Activated T-helper 1 cell treated with anti-CD3 and anti-CD28 coated beads, Interleukin-12 subunit alpha, Interleukin-12 subunit beta, Interleukin-2, Interleukin-4 antibody, amounts not matched to agents 30 ng/mL and 10 ng/mL and 1 ng/mL, durations not matched to agents 14 hours and 24 hours and 36 hours (primary cell): ENCODE measurements at regions of chr10 and their contacts with region 1.

Region 1: GRCh38 chr10:50417886-50418830 is 166.8 kb upstream of the ASAH2 start:
- DNase-seq: peak; percentile 64
- H3K4me3 Mint-ChIP-seq: peak overlapping the region; percentile 92
- H3K27ac Mint-ChIP-seq: peak overlapping the region; percentile 85
- H3K4me1 Mint-ChIP-seq: peaks cover 74% of the 10 kb centered on the region
- H3K27me3 Mint-ChIP-seq: no peaks in the 10 kb centered on the region

Region 2: GRCh38 chr10:49419005-49419404 is 999.2 kb before region 1 on chr10:
- intact Hi-C with region 1: no loop called
- DNase-seq: no peak
- H3K4me3 Mint-ChIP-seq: no peak overlapping the region
- H3K27ac Mint-ChIP-seq: no peak overlapping the region
- H3K4me1 Mint-ChIP-seq: no peaks in the 10 kb centered on the region
- H3K27me3 Mint-ChIP-seq: no peaks in the 10 kb centered on the region

Region 3: GRCh38 chr10:50291261-50291850 is 126.8 kb before region 1 on chr10:
- intact Hi-C with region 1: loop called (anchors 2 kb)
- DNase-seq: no peak
- H3K4me3 Mint-ChIP-seq: no peak overlapping the region
- H3K27ac Mint-ChIP-seq: no peak overlapping the region
- H3K4me1 Mint-ChIP-seq: no peaks in the 10 kb centered on the region
- H3K27me3 Mint-ChIP-seq: peaks cover 13% of the 10 kb centered on the region

Region 4: GRCh38 chr10:50367732-50368131 is 50.4 kb before region 1 on chr10:
- intact Hi-C with region 1: loop called (anchors 1 kb)
- DNase-seq: no peak
- H3K4me3 Mint-ChIP-seq: no peak overlapping the region
- H3K27ac Mint-ChIP-seq: no peak overlapping the region
- H3K4me1 Mint-ChIP-seq: peaks cover 8% of the 10 kb centered on the region
- H3K27me3 Mint-ChIP-seq: no peaks in the 10 kb centered on the region

Region 5: GRCh38 chr10:50396491-50397311 is 21.5 kb before region 1 on chr10:
- intact Hi-C with region 1: loop called (anchors 1 kb)
- DNase-seq: no peak
- H3K4me3 Mint-ChIP-seq: peak overlapping the region; percentile 71
- H3K27ac Mint-ChIP-seq: peak overlapping the region; percentile 88
- H3K4me1 Mint-ChIP-seq: peaks cover 37% of the 10 kb centered on the region
- H3K27me3 Mint-ChIP-seq: peaks cover 1% of the 10 kb centered on the region

Region 6: DNA sequence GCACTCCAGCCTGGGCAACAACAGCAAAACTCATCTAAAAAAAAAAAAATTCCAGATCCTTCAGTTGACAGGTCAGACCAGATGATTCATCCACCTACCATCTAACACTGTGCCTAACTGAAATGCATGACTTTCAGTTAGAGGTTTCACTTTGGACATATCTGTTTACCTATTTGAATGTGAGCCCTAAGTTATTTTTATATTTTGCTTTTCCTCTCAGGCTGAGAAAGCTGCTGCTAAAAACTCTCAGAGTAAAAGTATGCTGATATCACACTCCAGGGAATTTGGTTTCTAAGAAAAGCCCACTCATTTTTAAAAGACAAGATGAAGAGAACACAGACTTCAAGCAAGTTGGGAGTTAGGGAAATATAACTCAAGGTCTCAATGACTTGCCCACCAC is 79.6 kb after region 1 on chr10:
- intact Hi-C with region 1: loop called (anchors 2 kb)
- DNase-seq: no peak
- H3K4me3 Mint-ChIP-seq: peak overlapping the region; percentile 45
- H3K27ac Mint-ChIP-seq: peak overlapping the region; percentile 82
- H3K4me1 Mint-ChIP-seq: peaks cover 54% of the 10 kb centered on the region
- H3K27me3 Mint-ChIP-seq: no peaks in the 10 kb centered on the region

Region 7: GRCh38 chr10:50540069-50540825 is 122.1 kb after region 1 on chr10:
- intact Hi-C with region 1: loop called (anchors 1 kb)
- DNase-seq: no peak
- H3K4me3 Mint-ChIP-seq: peak overlapping the region; percentile 41
- H3K27ac Mint-ChIP-seq: peak overlapping the region; percentile 95
- H3K4me1 Mint-ChIP-seq: peaks cover 87% of the 10 kb centered on the region
- H3K27me3 Mint-ChIP-seq: no peaks in the 10 kb centered on the region

Region 8: GRCh38 chr10:50636618-50637579 is 218.7 kb after region 1 on chr10:
- intact Hi-C with region 1: loop called (anchors 1 kb)
- DNase-seq: peak; percentile 40
- H3K4me3 Mint-ChIP-seq: peak overlapping the region; percentile 41
- H3K27ac Mint-ChIP-seq: peak overlapping the region; percentile 1
- H3K4me1 Mint-ChIP-seq: peaks cover 43% of the 10 kb centered on the region
- H3K27me3 Mint-ChIP-seq: peaks cover 29% of the 10 kb centered on the region